K562 (cell line): ENCODE measurements at regions of chr19 and their contacts with region 1.

Region 1: DNA sequence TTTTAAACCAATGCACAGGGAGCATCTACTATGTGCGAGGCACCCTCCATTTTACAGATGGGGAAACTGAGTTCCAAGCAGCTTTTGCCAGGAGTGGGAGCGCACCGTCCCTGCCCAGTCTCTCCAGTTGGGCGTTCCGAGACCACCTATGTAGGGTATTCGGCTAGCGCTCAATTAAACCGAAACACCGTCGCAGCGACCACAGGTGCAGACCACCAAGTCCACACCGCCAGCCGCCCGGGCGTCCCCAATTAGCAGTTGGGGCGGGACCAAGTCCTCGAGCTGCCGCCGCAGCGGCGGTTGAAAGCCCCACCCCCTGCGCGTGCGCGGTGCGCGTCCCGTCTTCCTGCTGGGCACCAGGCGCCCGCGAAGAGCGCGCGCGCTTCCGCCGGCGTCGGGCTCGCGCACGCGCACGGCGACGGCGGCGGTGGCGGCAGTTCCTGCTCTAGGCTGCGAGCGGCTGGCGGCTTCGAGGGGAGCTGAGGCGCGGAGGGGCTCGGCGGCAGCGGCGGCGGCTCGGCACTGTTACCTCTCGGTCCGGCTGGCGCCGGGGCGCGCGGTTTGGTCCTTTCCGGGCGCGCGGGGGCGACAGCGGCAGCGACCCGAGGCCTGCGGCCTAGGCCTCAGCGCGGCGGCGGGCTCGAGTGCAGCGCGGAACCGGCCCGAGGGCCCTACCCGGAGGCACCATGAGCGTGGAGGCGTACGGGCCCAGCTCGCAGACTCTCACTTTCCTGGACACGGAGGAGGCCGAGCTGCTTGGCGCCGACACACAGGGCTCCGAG is at the start of gene UPF1:
- DNase-seq: peak; percentile 93 to 97 (median 94)
- ATAC-seq: peak; percentile 76
- H3K4me3 ChIP-seq: peak within 1 kb of the TSS; percentile 90
- H3K27ac ChIP-seq: peak within 1 kb of the TSS; percentile 96
- H3K4me1 ChIP-seq: peaks cover 16 to 22% of the 10 kb centered on the region in 2 experiments
- H3K27me3 ChIP-seq: no peaks in the 10 kb centered on the region
- CTCF ChIP-seq: no peak
- EP300 ChIP-seq: 0 out of 2 replicates have a peak, but pooled peaks have one; percentile 5
- POLR2A ChIP-seq: peak; percentile 67
- RAD21 ChIP-seq: no peak
- polyA plus RNA-seq, gene UPF1: 0.34 to 0.71 TPM

Region 2: DNA sequence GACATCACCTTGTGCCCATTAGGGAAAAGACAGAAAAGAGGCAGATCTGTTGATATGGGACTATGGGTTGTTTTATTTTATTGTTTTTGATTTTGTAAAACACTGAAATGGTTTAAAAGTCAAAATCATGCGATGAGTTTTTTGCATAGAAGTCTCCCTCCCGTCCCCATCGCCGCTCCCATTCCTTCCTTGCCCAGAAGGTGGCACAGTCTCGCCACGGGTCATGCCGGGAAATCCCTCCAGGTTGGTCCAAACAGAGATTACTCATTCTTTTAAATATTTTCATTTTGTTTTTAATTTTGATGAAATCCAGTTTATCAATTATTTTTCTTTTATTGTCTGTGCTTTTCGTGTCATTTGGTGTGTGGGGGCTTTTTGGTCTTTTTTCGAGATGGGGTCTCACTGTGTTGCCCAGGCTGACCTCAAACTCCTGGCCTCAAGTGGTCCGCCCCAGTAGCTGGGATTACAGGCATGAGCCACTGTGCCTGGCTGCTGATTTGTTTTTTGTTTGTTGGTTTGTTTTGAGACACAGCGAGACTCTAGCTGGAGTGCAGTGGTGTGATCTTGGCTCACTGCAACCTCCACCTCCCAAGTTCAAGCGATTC is 482.1 kb before region 1 on chr19:
- CTCF ChIA-PET with region 1: no interaction called
- POLR2A ChIA-PET with region 1: no interaction called
- in situ Hi-C with region 1: no loop called
- intact Hi-C with region 1: no loop called
- DNase-seq: peak; percentile 59 to 73 (median 67)
- ATAC-seq: peak; percentile 78
- H3K4me3 ChIP-seq: no peak overlapping the region
- H3K27ac ChIP-seq: no peak overlapping the region
- H3K4me1 ChIP-seq: peaks cover 0 to 5% of the 10 kb centered on the region in 2 experiments; a peak in 1 of 5 replicates
- H3K27me3 ChIP-seq: no peaks in the 10 kb centered on the region
- CTCF ChIP-seq: peak; percentile 78 to 96 (median 86)
- EP300 ChIP-seq: peak; percentile 13; the same call in 1 of the 2 replicates
- POLR2A ChIP-seq: no peak
- RAD21 ChIP-seq: peak; percentile 89 to 91

Region 3: GRCh38 chr19:18636183-18636968 is 195.3 kb before region 1 on chr19:
- CTCF ChIA-PET with region 1: no interaction called
- POLR2A ChIA-PET with region 1: interaction called, 4 read pairs
- in situ Hi-C with region 1: no loop called
- intact Hi-C with region 1: loop called (anchors 5 kb)
- DNase-seq: peak; percentile 94 to 99 (median 98)
- ATAC-seq: peak; percentile 95
- H3K4me3 ChIP-seq: peak overlapping the region; percentile 100
- H3K27ac ChIP-seq: peak overlapping the region; percentile 44
- H3K4me1 ChIP-seq: peaks cover 4 to 25% of the 10 kb centered on the region in 2 experiments; a peak in 4 of 5 replicates
- H3K27me3 ChIP-seq: peaks cover 10 to 16% of the 10 kb centered on the region in 2 experiments; a peak in 4 of 5 replicates
- CTCF ChIP-seq: no peak; a peak in 1 of 6 replicates
- EP300 ChIP-seq: no peak
- POLR2A ChIP-seq: no peak
- RAD21 ChIP-seq: no peak

Region 4: GRCh38 chr19:18846862-18847548 is 15.3 kb after region 1 on chr19:
- CTCF ChIA-PET with region 1: no interaction called
- POLR2A ChIA-PET with region 1: interaction called, 34 read pairs
- in situ Hi-C with region 1: no loop called
- intact Hi-C with region 1: no loop called
- DNase-seq: peak in 3 of 4 experiments; percentile 53 to 69 (median 65)
- ATAC-seq: peak; percentile 89
- H3K4me3 ChIP-seq: no peak overlapping the region
- H3K27ac ChIP-seq: 0 out of 3 replicates have a peak overlapping the region, but pooled peaks have one; percentile 21
- H3K4me1 ChIP-seq: peaks cover 2 to 30% of the 10 kb centered on the region in 2 experiments; a peak in 3 of 5 replicates
- H3K27me3 ChIP-seq: no peaks in the 10 kb centered on the region; a peak in 1 of 5 replicates
- CTCF ChIP-seq: peak; percentile 78 to 80 (median 80)
- EP300 ChIP-seq: no peak
- POLR2A ChIP-seq: no peak
- RAD21 ChIP-seq: peak; percentile 74 to 75

Region 5: GRCh38 chr19:18859676-18860301 is 28.1 kb after region 1 on chr19:
- CTCF ChIA-PET with region 1: no interaction called
- POLR2A ChIA-PET with region 1: no interaction called
- in situ Hi-C with region 1: no loop called
- intact Hi-C with region 1: no loop called
- DNase-seq: no peak
- ATAC-seq: no peak
- H3K4me3 ChIP-seq: no peak overlapping the region
- H3K27ac ChIP-seq: no peak overlapping the region
- H3K4me1 ChIP-seq: peaks cover 0 to 6% of the 10 kb centered on the region in 2 experiments; a peak in 1 of 5 replicates
- H3K27me3 ChIP-seq: no peaks in the 10 kb centered on the region
- CTCF ChIP-seq: no peak
- EP300 ChIP-seq: no peak
- POLR2A ChIP-seq: no peak
- RAD21 ChIP-seq: no peak